ENCODE measurements at regions of chr6 and their contacts with region 1.

Region 1: DNA sequence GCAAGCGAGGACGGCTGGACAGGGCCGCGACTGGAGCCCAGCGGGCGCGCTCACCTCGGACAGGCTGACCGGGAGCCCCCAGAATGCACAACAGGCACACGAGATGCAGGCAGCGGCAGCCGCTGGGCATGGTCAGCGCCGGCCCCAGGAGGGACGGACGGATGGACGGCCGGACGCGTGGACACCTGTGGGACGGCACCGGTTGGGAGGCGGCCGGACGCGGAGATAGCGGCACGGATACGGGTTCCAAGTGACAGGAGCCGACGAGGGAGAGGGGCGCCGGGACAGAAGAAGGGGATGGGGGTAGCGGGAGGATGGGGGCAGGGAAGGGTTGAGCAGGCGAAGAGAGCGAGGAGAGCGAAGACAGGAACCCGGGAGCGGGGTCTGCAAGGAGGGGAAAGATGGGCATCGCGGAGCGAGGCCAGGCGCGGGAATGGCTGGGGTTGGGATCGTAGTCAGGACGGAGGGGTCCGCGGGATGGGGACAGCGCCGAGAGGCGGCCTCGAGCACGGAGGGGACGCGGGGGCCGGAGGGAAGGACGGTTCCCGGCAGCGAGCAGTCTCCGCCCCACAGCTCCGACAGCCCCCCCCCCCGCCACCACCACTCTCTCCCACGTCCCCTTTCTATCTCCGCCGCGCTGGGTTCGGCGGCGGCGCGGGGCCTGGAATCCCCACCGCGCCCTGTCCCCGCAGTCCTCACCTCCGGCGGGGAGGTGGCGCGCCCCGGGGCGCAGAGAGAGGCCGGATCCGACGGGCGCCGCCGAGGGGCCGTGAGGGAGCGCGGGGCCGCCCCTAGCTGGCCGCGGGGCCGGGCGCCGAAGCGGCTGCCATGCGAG is 435 bp downstream of the DLK2 start:
- DNase-seq: peak in 41 of 42 donors; percentile 13 to 96 (median 88)

Region 2: DNA sequence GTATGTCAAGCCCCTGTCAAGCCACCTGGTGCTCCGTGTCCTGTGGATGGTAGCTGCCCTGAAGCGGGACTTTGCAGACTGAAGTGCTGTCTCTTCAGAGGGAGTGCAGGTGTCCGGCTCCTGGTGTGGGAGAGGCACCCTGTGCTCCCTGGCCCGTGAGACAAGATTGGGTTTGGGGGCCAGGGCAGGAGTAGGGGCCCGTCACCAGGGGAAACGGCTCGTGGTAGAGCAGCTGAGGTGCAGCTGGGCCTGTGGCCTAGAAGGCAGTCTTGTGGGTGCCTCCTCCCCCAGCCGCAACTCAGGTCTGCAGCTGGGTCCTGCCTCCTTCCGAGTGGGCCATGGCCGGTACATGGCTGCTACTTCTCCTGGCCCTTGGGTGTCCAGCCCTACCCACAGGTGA is 539.2 kb before region 1 on chr6 and contains the start of gene PTCRA:
- intact Hi-C with region 1: no loop called
- DNase-seq: no peak

Region 3: GRCh38 chr6:43496370-43497128 is 41.6 kb after region 1 on chr6:
- intact Hi-C with region 1: loop called (anchors 2 kb)
- DNase-seq: peak in 31 of 42 donors; percentile 41 to 83 (median 61)

Region 4: GRCh38 chr6:43506667-43507471 is 52.0 kb after region 1 on chr6:
- intact Hi-C with region 1: loop called (anchors 2 kb)
- DNase-seq: peak; percentile 60 to 95 (median 85)

Measured in head of caudate nucleus (tissue), 42 donors.